Activated CD4-positive, alpha-beta memory T cell treated with anti-CD3 and anti-CD28 coated beads for 36 hours (primary cell): ENCODE measurements at regions of chr22 and their contacts with region 1.

Region 1: DNA sequence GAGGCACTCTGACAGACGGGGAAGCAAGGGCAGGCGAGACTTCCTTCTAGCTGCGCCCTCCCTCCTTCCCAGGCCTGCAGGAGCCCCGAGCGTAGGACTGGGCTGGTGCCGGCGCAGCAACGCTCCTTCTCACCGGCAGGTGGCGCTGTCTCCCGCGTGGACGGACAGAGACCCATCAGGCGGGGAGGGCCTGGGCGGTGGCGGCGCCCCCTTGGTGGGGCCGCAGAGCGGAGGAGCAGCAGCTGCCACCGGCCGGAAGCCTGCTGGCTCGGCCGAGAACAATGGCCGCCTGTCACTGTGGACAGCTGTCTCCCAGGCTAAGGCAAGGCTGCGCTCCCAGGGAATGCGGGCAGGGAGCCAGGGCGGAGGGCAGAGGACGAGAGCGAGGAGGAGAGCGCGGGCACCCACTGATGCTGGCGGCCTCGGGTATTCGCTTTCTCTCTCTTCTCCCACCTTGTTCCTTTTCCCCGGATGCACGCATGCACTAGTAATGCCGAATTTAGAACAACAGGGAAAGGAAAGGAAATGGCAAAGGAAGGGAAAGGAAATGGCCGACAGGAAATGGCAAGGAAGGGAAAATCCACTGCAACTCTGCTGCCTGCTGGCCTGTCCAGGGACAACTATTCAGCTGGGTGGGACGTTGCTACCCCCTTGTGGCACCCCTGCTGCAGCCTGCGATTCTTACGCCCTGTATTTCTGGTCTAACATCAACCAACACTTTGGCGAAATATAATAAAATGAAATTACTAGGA is 14.4 kb downstream of the PPM1F start:
- DNase-seq: peak; percentile 94
- H3K4me3 Mint-ChIP-seq: peak overlapping the region; percentile 71
- H3K27ac Mint-ChIP-seq: peak overlapping the region; percentile 77
- H3K4me1 Mint-ChIP-seq: peaks cover 31% of the 10 kb centered on the region
- H3K27me3 Mint-ChIP-seq: no peaks in the 10 kb centered on the region

Region 2: GRCh38 chr22:21712894-21713712 is 225.1 kb before region 1 on chr22:
- CTCF ChIA-PET with region 1: interaction called, 9 read pairs
- POLR2A ChIA-PET with region 1: no interaction called
- intact Hi-C with region 1: loop called (anchors 1 kb)
- DNase-seq: peak; percentile 68
- H3K4me3 Mint-ChIP-seq: no peak overlapping the region
- H3K27ac Mint-ChIP-seq: no peak overlapping the region
- H3K4me1 Mint-ChIP-seq: peaks cover 8% of the 10 kb centered on the region
- H3K27me3 Mint-ChIP-seq: no peaks in the 10 kb centered on the region

Region 3: DNA sequence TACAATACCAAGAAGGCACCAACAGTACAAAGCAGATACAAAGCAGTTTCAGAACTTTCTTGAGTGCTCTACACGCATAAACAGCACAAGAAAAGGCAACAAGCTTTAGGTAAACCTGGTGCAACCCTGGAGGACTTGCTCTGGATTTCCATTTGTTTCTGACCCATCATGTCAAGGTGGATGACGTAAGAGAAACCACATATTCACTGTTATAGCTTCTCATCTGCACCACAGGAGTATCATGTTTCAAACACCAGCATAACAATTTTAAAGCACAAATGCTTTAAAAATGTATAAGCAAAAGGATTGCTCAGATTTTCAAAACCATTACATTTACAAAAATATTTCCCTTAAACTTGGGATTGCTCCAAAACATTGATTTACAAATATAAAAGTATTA is 177.6 kb before region 1 on chr22:
- CTCF ChIA-PET with region 1: interaction called, 18 read pairs
- POLR2A ChIA-PET with region 1: no interaction called
- intact Hi-C with region 1: loop called (anchors 5 kb)
- DNase-seq: no peak
- H3K4me3 Mint-ChIP-seq: no peak overlapping the region
- H3K27ac Mint-ChIP-seq: no peak overlapping the region
- H3K4me1 Mint-ChIP-seq: peaks cover 58% of the 10 kb centered on the region
- H3K27me3 Mint-ChIP-seq: peaks cover 4% of the 10 kb centered on the region

Region 4: DNA sequence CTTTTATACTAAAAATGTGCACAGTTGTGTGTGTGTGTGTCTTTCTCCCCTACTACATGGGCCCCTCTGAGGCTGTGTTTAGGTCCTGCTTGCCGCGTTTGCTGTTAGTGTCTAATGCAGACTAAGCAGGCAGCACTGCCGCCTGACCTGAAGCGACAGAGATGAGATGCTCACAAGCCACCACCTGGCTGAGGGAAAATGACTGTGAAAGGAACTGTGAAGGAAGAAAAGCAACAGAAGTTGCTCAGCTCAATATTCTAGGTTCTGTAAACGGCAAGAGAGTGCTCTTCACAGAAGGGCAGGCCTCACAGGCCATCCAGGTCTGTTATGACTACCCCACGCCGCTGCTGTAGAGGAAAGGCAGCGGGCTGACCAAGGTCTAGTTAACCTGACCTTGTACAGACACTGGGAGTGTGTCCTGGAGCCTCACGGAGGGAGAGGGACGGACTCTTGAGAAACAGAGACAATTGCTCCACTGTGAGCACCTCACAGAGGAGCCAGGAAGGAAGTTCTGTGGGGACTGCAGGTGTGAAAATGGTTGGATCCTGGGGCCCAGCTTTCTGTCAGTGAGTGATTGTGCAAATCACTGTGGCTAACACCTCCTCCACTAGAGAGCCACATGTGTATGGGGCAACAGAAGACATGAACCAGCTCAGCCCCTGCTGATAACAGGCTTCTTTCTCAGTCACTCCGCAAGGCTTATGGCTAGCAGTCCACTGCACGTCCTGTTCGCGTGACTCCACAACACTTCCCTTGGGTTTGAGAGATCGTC is 171.4 kb before region 1 on chr22:
- CTCF ChIA-PET with region 1: interaction called, 18 read pairs
- POLR2A ChIA-PET with region 1: no interaction called
- intact Hi-C with region 1: loop called (anchors 5 kb)
- DNase-seq: peak; percentile 85
- H3K4me3 Mint-ChIP-seq: peak overlapping the region; percentile 5
- H3K27ac Mint-ChIP-seq: peak overlapping the region; percentile 66
- H3K4me1 Mint-ChIP-seq: peaks cover 68% of the 10 kb centered on the region
- H3K27me3 Mint-ChIP-seq: peaks cover 5% of the 10 kb centered on the region

Region 5: GRCh38 chr22:21876486-21877176 is 61.6 kb before region 1 on chr22:
- CTCF ChIA-PET with region 1: interaction called, 10 read pairs
- POLR2A ChIA-PET with region 1: no interaction called
- intact Hi-C with region 1: no loop called
- DNase-seq: peak; percentile 67
- H3K4me3 Mint-ChIP-seq: no peak overlapping the region
- H3K27ac Mint-ChIP-seq: peak overlapping the region; percentile 72
- H3K4me1 Mint-ChIP-seq: peaks cover 20% of the 10 kb centered on the region
- H3K27me3 Mint-ChIP-seq: peaks cover 8% of the 10 kb centered on the region

Region 6: DNA sequence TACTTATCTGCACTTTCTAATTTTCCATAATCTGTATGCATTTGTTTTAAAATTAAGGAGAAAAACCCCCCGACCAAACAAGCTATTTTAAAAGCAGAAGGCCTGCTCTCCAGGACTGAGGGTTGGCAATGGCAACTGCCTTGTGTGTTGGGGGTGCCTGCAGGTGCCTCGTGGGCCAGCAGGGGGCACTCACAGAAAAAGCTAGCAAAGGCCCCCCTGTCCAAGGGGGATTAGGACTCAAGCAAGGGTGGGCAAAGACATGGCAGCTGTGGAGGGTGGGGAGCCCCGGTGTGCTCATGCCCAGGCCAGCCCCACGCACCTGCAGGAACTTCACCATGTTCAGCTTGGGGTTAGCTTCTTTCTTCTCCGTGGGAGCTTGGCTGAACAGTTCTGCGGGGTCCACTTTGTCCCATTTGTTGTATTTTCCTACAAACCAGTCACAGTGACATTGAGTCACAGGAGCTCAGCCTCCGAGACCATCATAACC is 34.1 kb after region 1 on chr22:
- CTCF ChIA-PET with region 1: interaction called, 11 read pairs
- POLR2A ChIA-PET with region 1: no interaction called
- intact Hi-C with region 1: no loop called
- DNase-seq: peak; percentile 68
- H3K4me3 Mint-ChIP-seq: no peak overlapping the region
- H3K27ac Mint-ChIP-seq: no peak overlapping the region
- H3K4me1 Mint-ChIP-seq: no peaks in the 10 kb centered on the region
- H3K27me3 Mint-ChIP-seq: no peaks in the 10 kb centered on the region